ENCODE measurements at regions of chr14 and their contacts with region 1.

Region 1: DNA sequence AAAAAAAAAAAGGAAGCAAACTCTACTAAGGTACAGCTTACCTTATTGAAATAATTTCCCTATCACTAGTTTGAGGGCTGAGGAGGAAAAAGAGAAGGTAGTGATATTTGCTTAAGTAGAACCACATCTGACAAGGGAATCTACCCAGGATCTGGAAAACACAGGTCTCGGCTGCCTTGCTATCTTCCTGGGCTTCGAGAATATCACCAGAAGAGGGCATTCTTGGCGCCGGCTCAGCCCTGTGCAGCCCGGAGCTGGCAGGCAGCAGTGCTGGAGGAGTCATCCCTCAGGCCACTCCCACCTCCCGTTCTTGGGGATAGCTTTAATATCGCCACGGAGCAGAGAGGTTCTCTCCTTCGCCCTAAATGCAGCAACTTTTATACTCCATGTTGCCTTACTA is 1181.2 kb downstream of the VRK1 start:
- DNase-seq: peak; percentile 86
- ATAC-seq: peak; percentile 90
- H3K4me3 Mint-ChIP-seq: peak overlapping the region; percentile 93
- H3K27ac Mint-ChIP-seq: peak overlapping the region; percentile 95
- H3K4me1 Mint-ChIP-seq: peaks cover 52% of the 10 kb centered on the region
- H3K27me3 Mint-ChIP-seq: no peaks in the 10 kb centered on the region

Region 2: DNA sequence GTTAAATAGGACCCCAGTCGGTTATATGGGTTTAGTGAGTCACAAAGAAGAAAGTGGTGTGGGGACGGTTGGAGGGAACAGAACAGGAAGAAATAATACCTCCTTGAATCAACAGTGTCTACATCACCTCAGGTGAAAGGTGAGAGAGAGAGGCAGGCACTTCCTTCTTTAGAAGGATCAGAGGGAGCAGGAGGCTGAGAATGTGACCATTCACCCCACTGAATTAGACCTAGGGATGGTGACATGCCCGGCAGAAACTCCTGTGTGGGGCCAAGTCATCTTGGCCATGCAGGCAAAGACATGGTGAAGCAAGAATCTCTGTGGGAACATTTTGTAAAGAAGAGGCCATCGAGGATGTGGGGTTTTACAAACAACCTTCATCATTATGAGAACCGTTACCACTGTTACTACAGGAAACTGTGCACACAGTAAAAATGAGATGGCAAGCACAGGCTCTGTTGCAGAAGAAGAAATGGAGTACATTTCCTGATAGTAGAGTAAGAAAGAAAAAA is 15.7 kb after region 1 on chr14:
- CTCF ChIA-PET with region 1: interaction called, 42 read pairs
- POLR2A ChIA-PET with region 1: interaction called, 15 read pairs
- DNase-seq: peak; percentile 42
- ATAC-seq: peak; percentile 76
- H3K4me3 Mint-ChIP-seq: peak overlapping the region; percentile 1
- H3K27ac Mint-ChIP-seq: peak overlapping the region; percentile 90
- H3K4me1 Mint-ChIP-seq: peaks cover 31% of the 10 kb centered on the region
- H3K27me3 Mint-ChIP-seq: no peaks in the 10 kb centered on the region

Region 3: DNA sequence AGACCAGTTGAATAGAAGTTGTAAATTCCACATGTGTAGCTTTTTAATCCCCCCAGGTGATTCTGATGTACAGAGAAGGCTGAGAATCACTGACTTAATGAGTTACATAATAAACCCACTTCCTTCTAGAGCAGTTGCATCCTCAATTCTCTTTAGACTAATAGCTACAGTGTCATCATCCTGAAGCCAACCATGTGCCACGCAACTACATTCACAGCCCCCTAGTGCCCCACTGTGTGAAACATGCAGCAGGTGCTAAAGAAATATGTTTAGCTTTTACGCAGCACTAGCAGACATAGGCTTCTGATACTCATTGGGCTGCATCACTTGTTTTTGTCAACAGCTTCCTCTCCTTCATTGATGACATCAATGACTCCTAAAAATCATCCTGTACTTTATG is 125.4 kb after region 1 on chr14:
- CTCF ChIA-PET with region 1: interaction called, 12 read pairs
- POLR2A ChIA-PET with region 1: interaction called, 4 read pairs
- DNase-seq: no peak
- ATAC-seq: no peak
- H3K4me3 Mint-ChIP-seq: no peak overlapping the region
- H3K27ac Mint-ChIP-seq: no peak overlapping the region
- H3K4me1 Mint-ChIP-seq: peaks cover 14% of the 10 kb centered on the region
- H3K27me3 Mint-ChIP-seq: no peaks in the 10 kb centered on the region

Region 4: GRCh38 chr14:98173305-98173704 is 195.0 kb after region 1 on chr14:
- CTCF ChIA-PET with region 1: interaction called, 10 read pairs
- POLR2A ChIA-PET with region 1: interaction called, 10 read pairs
- DNase-seq: peak; percentile 80
- ATAC-seq: peak; percentile 35
- H3K4me3 Mint-ChIP-seq: peak overlapping the region; percentile 70
- H3K27ac Mint-ChIP-seq: peak overlapping the region; percentile 84
- H3K4me1 Mint-ChIP-seq: peaks cover 95% of the 10 kb centered on the region
- H3K27me3 Mint-ChIP-seq: no peaks in the 10 kb centered on the region

Region 5: GRCh38 chr14:99266181-99267178 is 1288.1 kb after region 1 on chr14:
- CTCF ChIA-PET with region 1: interaction called, 16 read pairs
- POLR2A ChIA-PET with region 1: interaction called, 16 read pairs
- DNase-seq: peak; percentile 93
- ATAC-seq: peak; percentile 28
- H3K4me3 Mint-ChIP-seq: peak overlapping the region; percentile 88
- H3K27ac Mint-ChIP-seq: peak overlapping the region; percentile 98
- H3K4me1 Mint-ChIP-seq: peaks cover 59% of the 10 kb centered on the region
- H3K27me3 Mint-ChIP-seq: no peaks in the 10 kb centered on the region

Measured in activated CD8-positive, alpha-beta T cell treated with anti-CD3 and anti-CD28 coated beads, Interleukin-2, amount 10 ng/mL, durations not matched to agents 7 days and 5 days (primary cell).